ENCODE measurements at regions of chr4 and their contacts with region 1.

Region 1: GRCh38 chr4:183249857-183250256 is 70.2 kb downstream of the CLDN22 start:
- DNase-seq: peak; percentile 43 to 74 (median 69)
- H3K4me3 ChIP-seq: no peak overlapping the region
- H3K27ac ChIP-seq: no peak overlapping the region
- H3K4me1 ChIP-seq: no peaks in the 10 kb centered on the region
- H3K27me3 ChIP-seq: no peaks in the 10 kb centered on the region

Region 2: GRCh38 chr4:183080372-183081115 is 169.3 kb before region 1 on chr4:
- CTCF ChIA-PET with region 1: interaction called, 146 read pairs
- POLR2A ChIA-PET with region 1: interaction called, 3 read pairs
- DNase-seq: no peak
- H3K4me3 ChIP-seq: no peak overlapping the region
- H3K27ac ChIP-seq: no peak overlapping the region
- H3K4me1 ChIP-seq: no peaks in the 10 kb centered on the region
- H3K27me3 ChIP-seq: peaks cover 0 to 1% (median 0%) of the 10 kb centered on the region in 5 experiments

Region 3: DNA sequence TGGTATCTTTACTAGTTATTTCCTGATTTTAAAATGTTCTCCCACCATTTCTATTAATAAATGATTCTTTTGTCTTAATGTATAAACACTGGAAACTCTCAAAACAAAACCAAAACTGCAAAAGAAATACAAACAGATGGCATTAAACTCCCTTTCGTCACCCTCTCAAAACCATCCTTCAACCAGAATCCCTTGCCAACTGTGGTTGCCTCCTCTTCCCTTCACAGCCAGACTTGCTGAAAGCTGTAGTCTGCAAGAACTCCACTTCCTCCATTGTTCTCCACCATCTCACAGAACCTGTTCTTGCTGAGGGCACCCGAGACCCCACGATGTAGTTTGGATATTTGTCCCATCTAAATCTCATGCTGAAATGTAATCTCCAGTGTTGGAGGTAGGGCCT is 54.3 kb before region 1 on chr4:
- CTCF ChIA-PET with region 1: no interaction called
- POLR2A ChIA-PET with region 1: no interaction called
- DNase-seq: peak in 1 of 3 donors; percentile 28
- H3K4me3 ChIP-seq: no peak overlapping the region
- H3K27ac ChIP-seq: no peak overlapping the region
- H3K4me1 ChIP-seq: peaks cover 0 to 10% (median 5%) of the 10 kb centered on the region in 4 experiments
- H3K27me3 ChIP-seq: no peaks in the 10 kb centered on the region